ENCODE measurements at regions of chrX and their contacts with region 1.

Region 1: GRCh38 chrX:17413228-17413627 is 38.2 kb downstream of the NHS start:
- DNase-seq: peak; percentile 45
- ATAC-seq: peak; percentile 23
- H3K4me3 ChIP-seq: peak overlapping the region; percentile 55
- H3K27ac ChIP-seq: peak overlapping the region; percentile 99
- H3K4me1 ChIP-seq: peaks cover 49% of the 10 kb centered on the region
- H3K27me3 ChIP-seq: no peaks in the 10 kb centered on the region
- CTCF ChIP-seq: no peak

Region 2: GRCh38 chrX:17441965-17442364 is 28.7 kb after region 1 on chrX:
- CTCF ChIA-PET with region 1: no interaction called
- POLR2A ChIA-PET with region 1: no interaction called
- intact Hi-C with region 1: loop called (anchors 2 kb)
- DNase-seq: peak; percentile 80
- ATAC-seq: peak; percentile 97
- H3K4me3 ChIP-seq: 0 out of 2 replicates have a peak overlapping the region, but pooled peaks have one; percentile 30
- H3K27ac ChIP-seq: peak overlapping the region; percentile 93
- H3K4me1 ChIP-seq: peaks cover 33% of the 10 kb centered on the region
- H3K27me3 ChIP-seq: no peaks in the 10 kb centered on the region
- CTCF ChIP-seq: no peak

Region 3: GRCh38 chrX:17597836-17598442 is 184.7 kb after region 1 on chrX:
- CTCF ChIA-PET with region 1: interaction called, 3 read pairs
- POLR2A ChIA-PET with region 1: no interaction called
- intact Hi-C with region 1: loop called (anchors 1 kb)
- DNase-seq: no peak
- ATAC-seq: no peak
- H3K4me3 ChIP-seq: no peak overlapping the region
- H3K27ac ChIP-seq: no peak overlapping the region
- H3K4me1 ChIP-seq: peaks cover 23% of the 10 kb centered on the region
- H3K27me3 ChIP-seq: no peaks in the 10 kb centered on the region
- CTCF ChIP-seq: no peak